ENCODE measurements at regions of chr10 and their contacts with region 1.

Region 1: GRCh38 chr10:68997211-68997610 is 8.6 kb downstream of the KIFBP start:
- DNase-seq: no peak
- ATAC-seq: peak; percentile 10
- H3K4me3 Mint-ChIP-seq: peak overlapping the region; percentile 13
- H3K27ac Mint-ChIP-seq: peak overlapping the region; percentile 96
- H3K4me1 Mint-ChIP-seq: peaks cover 45% of the 10 kb centered on the region
- H3K27me3 Mint-ChIP-seq: no peaks in the 10 kb centered on the region

Region 2: GRCh38 chr10:69222157-69223027 is 225.2 kb after region 1 on chr10:
- CTCF ChIA-PET with region 1: no interaction called
- POLR2A ChIA-PET with region 1: interaction called, 4 read pairs
- intact Hi-C with region 1: loop called in 1 of 2 experiments (anchors 1 kb)
- DNase-seq: peak; percentile 90
- ATAC-seq: peak; percentile 92
- H3K4me3 Mint-ChIP-seq: peak overlapping the region; percentile 52
- H3K27ac Mint-ChIP-seq: peak overlapping the region; percentile 91
- H3K4me1 Mint-ChIP-seq: peaks cover 32% of the 10 kb centered on the region
- H3K27me3 Mint-ChIP-seq: no peaks in the 10 kb centered on the region

Region 3: DNA sequence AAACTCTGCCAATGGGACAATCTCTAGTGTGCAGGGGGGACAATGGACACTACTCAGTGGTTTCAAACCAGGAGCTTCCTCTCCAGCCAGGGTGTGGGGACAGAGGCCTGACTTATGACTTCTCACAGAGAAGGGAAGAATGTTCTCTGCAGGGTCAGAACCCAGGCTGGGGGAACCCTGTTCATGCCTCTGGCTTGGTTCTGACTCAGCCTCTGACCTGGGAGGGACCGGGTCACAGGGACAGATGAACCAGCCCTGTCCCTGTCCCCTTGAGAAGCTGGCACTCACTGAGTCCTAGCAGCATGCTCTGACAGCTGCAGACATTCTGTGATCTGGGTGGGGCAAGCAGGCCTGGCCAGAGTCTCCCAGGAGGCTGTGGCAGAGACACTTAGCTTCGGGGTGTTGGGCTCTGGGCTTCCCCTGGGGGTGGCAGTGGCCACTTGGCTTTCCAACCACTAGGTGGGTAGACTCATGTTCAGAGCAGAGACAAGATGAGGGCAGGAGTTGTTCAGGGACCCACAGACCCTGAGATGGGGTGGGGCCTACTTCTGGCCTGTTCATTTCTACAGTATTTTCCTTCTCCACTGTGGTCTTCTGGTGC is 467.7 kb after region 1 on chr10:
- CTCF ChIA-PET with region 1: no interaction called
- POLR2A ChIA-PET with region 1: no interaction called
- intact Hi-C with region 1: no loop called
- DNase-seq: peak; percentile 13
- ATAC-seq: peak; percentile 49
- H3K4me3 Mint-ChIP-seq: no peak overlapping the region
- H3K27ac Mint-ChIP-seq: no peak overlapping the region
- H3K4me1 Mint-ChIP-seq: peaks cover 2% of the 10 kb centered on the region
- H3K27me3 Mint-ChIP-seq: no peaks in the 10 kb centered on the region